T-cell (primary cell): ENCODE measurements at regions of chr1 and their contacts with region 1.

Region 1: DNA sequence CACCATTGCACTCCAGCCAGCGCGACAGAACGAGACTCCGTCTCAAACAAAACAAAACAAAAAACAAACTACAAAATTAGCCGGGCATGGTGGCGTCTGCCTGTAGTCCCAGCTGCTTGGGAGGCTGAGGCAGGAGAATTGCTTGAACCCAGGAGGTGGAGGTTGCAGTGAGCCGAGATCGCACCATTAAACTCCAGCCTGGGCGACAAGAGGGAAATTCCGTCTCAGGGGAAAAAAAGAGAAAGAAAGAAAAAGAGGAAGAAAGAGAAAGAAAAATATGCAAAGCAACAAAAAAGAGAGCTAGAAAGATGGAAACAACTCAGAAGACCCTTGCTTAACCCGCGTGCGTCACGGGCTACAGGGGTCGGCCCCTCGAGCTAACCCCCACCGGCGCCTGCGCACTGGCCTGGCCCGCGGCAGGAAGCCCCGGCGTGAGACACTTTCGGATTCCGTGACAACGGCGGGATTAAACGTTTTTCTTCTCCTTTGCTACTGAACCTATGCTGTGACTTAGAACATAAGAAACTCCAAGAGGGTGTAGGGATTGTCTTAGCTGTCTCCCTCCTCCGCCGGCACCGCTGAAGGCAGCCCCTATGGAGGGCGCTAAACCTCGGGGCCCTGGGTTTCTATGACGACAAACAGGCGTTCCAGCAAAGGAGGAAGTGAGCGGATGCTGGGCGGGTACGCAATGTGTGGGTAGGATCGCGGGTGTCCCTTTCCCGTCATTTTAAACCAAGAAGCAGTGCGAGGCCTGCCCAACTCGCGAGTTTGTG is at the start of gene AXDND1:
- DNase-seq: peak; percentile 81 to 96 (median 92)
- ATAC-seq: peak; percentile 91 to 96 (median 96)
- H3K4me3 ChIP-seq: peak within 1 kb of the TSS; percentile 77 to 83
- H3K4me3 Mint-ChIP-seq: peak within 1 kb of the TSS; percentile 89 to 98 (median 97)
- H3K27ac ChIP-seq: peak within 1 kb of the TSS; percentile 97
- H3K27ac Mint-ChIP-seq: peak within 1 kb of the TSS; percentile 100
- H3K4me1 ChIP-seq: peaks cover 0 to 16% of the 10 kb centered on the region in 2 experiments
- H3K4me1 Mint-ChIP-seq: peaks cover 6 to 15% (median 13%) of the 10 kb centered on the region in 3 donors
- H3K27me3 ChIP-seq: no peaks in the 10 kb centered on the region
- H3K27me3 Mint-ChIP-seq: no peaks in the 10 kb centered on the region
- total RNA-seq, gene AXDND1: 0.19 to 1.5 (median 0.77) TPM in 3 of 5 donors, not detected in the others

Region 2: DNA sequence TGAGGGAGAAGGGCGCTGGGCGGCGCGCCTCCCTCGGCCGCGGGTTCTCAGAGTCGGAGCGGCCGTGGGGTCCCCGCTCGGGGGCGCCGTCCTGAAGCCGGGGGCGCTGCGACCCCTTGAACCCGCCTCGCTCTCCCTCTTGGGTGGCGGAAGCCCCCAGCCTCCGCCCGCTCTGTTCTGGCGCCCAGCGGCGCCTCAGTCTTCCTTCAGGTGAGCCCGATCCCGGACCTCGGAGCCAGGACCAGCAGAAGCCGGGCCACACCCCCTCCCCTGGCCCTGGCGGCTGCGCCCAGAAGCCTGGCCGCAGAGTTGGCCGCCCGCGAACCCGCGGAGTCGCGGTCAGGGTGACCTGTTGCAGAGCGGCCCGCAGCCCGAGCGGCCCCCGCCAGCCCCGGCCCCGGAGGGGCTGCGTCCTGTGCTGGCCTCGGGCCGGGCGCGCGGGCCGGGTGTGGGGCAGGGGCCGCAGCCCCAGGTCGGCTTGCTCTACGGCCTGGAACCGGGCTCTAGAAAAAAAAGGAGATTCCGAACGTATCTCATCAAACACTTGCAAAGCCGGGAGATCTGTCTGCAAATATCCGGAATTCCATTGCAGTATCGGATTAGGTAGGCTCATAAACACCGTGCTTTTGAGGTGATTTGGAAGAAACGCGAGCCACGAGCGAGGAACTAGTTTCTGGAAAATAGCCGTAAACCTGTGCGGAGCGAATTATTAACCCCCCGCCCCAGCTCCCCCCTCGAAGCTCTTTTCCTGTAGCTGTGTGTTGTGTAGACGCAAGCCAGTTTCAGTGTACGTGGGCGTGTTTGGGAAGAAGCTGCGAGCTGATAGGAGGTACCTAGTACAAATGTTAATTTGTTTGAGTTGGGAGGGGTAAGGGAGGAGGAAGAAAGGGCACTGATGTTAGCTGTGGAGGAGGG is 639.6 kb before region 1 on chr1:
- CTCF ChIA-PET with region 1: interaction called in 1 of 2 experiments, 3 read pairs
- POLR2A ChIA-PET with region 1: interaction called in 1 of 2 experiments, 10 read pairs
- DNase-seq: peak; percentile 27 to 76 (median 56)
- ATAC-seq: peak; percentile 74 to 84 (median 76)
- H3K4me3 ChIP-seq: peak overlapping the region; percentile 75 to 86
- H3K4me3 Mint-ChIP-seq: peak overlapping the region; percentile 79 to 89 (median 88)
- H3K27ac ChIP-seq: peak overlapping the region; percentile 52
- H3K27ac Mint-ChIP-seq: peak overlapping the region; percentile 85 to 89
- H3K4me1 ChIP-seq: peaks cover 7 to 9% of the 10 kb centered on the region in 2 experiments
- H3K4me1 Mint-ChIP-seq: peaks cover 27 to 30% (median 27%) of the 10 kb centered on the region in 3 donors
- H3K27me3 ChIP-seq: peaks cover 0 to 8% of the 10 kb centered on the region in 2 experiments
- H3K27me3 Mint-ChIP-seq: peaks cover 0 to 21% of the 10 kb centered on the region in 2 donors

Region 3: DNA sequence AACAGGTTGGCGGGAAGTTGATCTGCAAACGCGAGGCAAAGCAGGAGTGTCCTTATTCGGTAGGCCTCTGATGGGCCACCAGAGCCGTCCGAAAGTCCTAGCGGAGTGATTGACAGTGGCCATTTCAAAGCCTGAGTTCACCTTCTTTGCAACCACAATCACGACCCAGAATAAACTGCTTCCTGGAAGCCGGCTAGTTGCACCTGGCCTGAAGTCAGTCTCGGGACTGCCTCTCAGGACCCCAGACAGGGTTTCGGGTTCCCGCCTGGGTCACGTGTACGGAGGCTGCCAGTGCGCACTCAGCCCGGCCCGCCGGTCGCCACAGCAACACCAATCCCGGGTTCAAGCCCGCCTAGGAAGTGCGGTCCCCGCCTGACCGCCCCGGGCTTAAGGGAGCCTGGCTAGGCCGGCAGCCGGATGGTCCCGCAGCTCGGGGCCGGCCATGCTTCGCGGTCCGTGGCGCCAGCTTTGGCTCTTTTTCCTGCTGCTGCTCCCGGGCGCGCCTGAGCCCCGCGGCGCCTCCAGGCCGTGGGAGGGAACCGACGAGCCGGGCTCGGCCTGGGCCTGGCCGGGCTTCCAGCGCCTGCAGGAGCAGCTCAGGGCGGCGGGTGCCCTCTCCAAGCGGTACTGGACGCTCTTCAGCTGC is 283.7 kb before region 1 on chr1 and contains the start of gene TOR3A:
- CTCF ChIA-PET with region 1: interaction called, 7 to 15 read pairs
- POLR2A ChIA-PET with region 1: interaction called in 1 of 2 experiments, 7 read pairs
- DNase-seq: peak; percentile 39 to 81 (median 59)
- ATAC-seq: peak; percentile 73 to 87 (median 81)
- H3K4me3 ChIP-seq: peak within 1 kb of the TSS; percentile 75 to 83
- H3K4me3 Mint-ChIP-seq: peak within 1 kb of the TSS; percentile 94 to 98 (median 97)
- H3K27ac ChIP-seq: peak within 1 kb of the TSS; percentile 81
- H3K27ac Mint-ChIP-seq: peak within 1 kb of the TSS; percentile 92 to 93
- H3K4me1 ChIP-seq: peaks cover 11 to 36% of the 10 kb centered on the region in 2 experiments
- H3K4me1 Mint-ChIP-seq: peaks cover 26 to 35% (median 28%) of the 10 kb centered on the region in 3 donors
- H3K27me3 ChIP-seq: no peaks in the 10 kb centered on the region
- H3K27me3 Mint-ChIP-seq: no peaks in the 10 kb centered on the region
- total RNA-seq, gene TOR3A: 19.1 to 30.6 (median 23.7) TPM

Region 4: GRCh38 chr1:179121159-179121938 is 244.2 kb before region 1 on chr1:
- CTCF ChIA-PET with region 1: interaction called, 6 to 13 read pairs
- POLR2A ChIA-PET with region 1: interaction called, 3 read pairs
- DNase-seq: peak in 26 of 35 experiments; percentile 3 to 67 (median 32)
- ATAC-seq: peak in 3 of 4 experiments; percentile 20 to 52 (median 47)
- H3K4me3 ChIP-seq: no peak overlapping the region
- H3K4me3 Mint-ChIP-seq: no peak overlapping the region
- H3K27ac ChIP-seq: no peak overlapping the region
- H3K27ac Mint-ChIP-seq: no peak overlapping the region
- H3K4me1 ChIP-seq: no peaks in the 10 kb centered on the region
- H3K4me1 Mint-ChIP-seq: peaks cover 0 to 4% (median 3%) of the 10 kb centered on the region in 3 donors
- H3K27me3 ChIP-seq: no peaks in the 10 kb centered on the region
- H3K27me3 Mint-ChIP-seq: no peaks in the 10 kb centered on the region

Region 5: DNA sequence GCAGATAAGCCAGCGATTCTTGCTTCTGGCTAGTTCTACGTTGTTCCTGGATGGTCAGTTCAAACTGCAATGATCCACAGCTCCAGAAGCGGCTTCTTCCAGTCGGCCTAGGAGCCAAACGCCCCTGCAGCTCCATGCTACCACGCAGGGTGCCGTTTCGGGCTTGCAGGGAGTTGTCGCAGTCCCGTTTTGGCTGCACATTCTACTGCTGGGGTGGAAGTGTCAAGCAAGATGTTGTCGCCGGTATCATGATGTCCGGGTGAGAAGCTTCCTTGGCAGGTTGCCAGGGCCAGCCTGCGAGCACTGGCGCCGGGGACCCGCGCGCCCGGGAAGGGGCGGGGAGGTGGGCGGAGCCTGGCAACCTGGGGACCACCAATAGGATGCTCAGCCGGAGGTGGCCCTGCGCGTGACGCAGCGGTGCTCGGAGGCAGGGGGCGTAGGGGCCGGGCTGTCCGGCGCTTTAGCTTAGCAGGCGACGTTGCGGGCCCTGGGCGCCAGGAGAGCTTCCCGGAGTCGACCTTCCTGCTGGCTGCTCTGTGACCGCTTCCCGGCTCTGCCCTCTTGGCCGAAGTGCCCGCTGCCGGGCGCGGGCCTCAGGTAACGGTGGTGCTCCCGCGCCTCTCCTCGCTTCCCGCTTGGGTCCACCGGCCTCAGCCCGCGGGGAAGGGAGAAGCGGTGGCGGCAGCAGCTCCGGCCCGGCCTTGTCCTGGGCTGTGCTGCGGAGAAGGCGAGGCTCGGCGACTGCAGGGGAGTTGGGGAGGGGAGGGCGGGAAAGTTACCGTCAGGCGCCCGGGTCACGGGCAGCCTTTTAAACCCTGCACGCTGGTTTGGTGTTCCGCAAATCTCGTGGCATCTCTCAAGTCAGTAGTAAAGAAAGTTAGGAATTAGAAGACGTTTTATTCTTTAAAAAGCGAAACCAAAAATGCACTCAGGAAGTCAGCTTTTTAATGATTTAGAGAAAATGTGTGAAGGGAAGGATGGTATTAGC is 71.9 kb before region 1 on chr1 and contains the start of gene SOAT1:
- CTCF ChIA-PET with region 1: interaction called in 1 of 2 experiments, 13 read pairs
- POLR2A ChIA-PET with region 1: interaction called, 3 to 17 read pairs
- DNase-seq: peak; percentile 79 to 96 (median 89)
- ATAC-seq: peak; percentile 95 to 98 (median 98)
- H3K4me3 ChIP-seq: peak within 1 kb of the TSS; percentile 89 to 94
- H3K4me3 Mint-ChIP-seq: peak within 1 kb of the TSS; percentile 89 to 99 (median 97)
- H3K27ac ChIP-seq: peak within 1 kb of the TSS; percentile 76
- H3K27ac Mint-ChIP-seq: peak within 1 kb of the TSS; percentile 94 to 97
- H3K4me1 ChIP-seq: peaks cover 30 to 41% of the 10 kb centered on the region in 2 experiments
- H3K4me1 Mint-ChIP-seq: peaks cover 42 to 52% (median 42%) of the 10 kb centered on the region in 3 donors
- H3K27me3 ChIP-seq: no peaks in the 10 kb centered on the region
- H3K27me3 Mint-ChIP-seq: no peaks in the 10 kb centered on the region
- total RNA-seq, gene SOAT1: 35.0 to 42.1 (median 39.1) TPM